ENCODE measurements at regions of chr17 and their contacts with region 1.

Region 1: GRCh38 chr17:64506576-64507477 is at the start of gene CEP95:
- DNase-seq: peak; percentile 98
- ATAC-seq: peak; percentile 64
- H3K4me3 Mint-ChIP-seq: peak within 1 kb of the TSS; percentile 99
- H3K27ac Mint-ChIP-seq: peak within 1 kb of the TSS; percentile 100
- H3K4me1 Mint-ChIP-seq: peaks cover 45% of the 10 kb centered on the region
- H3K27me3 Mint-ChIP-seq: no peaks in the 10 kb centered on the region
- total RNA-seq, gene CEP95: 49.2 to 51.7 TPM

Region 2: DNA sequence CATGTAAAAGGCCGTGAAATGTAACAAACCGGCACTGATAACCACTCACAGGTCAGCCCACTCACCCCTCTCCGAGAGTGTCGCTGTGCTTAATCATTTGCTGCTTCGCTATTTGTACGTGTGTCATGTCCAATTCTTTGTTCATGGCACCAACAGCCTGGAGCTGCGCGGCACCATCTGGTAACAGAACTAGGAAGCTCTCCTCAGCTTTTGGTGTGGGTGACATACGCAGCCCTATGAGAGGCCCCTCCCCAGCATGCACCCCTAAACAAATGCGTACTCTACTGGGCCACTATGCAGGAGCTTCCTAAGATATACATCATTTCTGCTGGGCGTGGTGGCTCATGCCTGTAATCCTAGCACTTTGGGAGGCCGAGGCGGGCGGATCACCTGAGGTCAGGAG is 113.8 kb before region 1 on chr17:
- CTCF ChIA-PET with region 1: interaction called, 3 read pairs
- POLR2A ChIA-PET with region 1: interaction called, 31 read pairs
- DNase-seq: peak; percentile 64
- ATAC-seq: peak; percentile 52
- H3K4me3 Mint-ChIP-seq: peak overlapping the region; percentile 88
- H3K27ac Mint-ChIP-seq: peak overlapping the region; percentile 95
- H3K4me1 Mint-ChIP-seq: peaks cover 71% of the 10 kb centered on the region
- H3K27me3 Mint-ChIP-seq: no peaks in the 10 kb centered on the region

Region 3: GRCh38 chr17:64399071-64399766 is 107.6 kb before region 1 on chr17:
- CTCF ChIA-PET with region 1: no interaction called
- POLR2A ChIA-PET with region 1: interaction called, 31 read pairs
- DNase-seq: peak; percentile 51
- ATAC-seq: peak; percentile 13
- H3K4me3 Mint-ChIP-seq: peak overlapping the region; percentile 54
- H3K27ac Mint-ChIP-seq: peak overlapping the region; percentile 78
- H3K4me1 Mint-ChIP-seq: peaks cover 67% of the 10 kb centered on the region
- H3K27me3 Mint-ChIP-seq: no peaks in the 10 kb centered on the region

Region 4: DNA sequence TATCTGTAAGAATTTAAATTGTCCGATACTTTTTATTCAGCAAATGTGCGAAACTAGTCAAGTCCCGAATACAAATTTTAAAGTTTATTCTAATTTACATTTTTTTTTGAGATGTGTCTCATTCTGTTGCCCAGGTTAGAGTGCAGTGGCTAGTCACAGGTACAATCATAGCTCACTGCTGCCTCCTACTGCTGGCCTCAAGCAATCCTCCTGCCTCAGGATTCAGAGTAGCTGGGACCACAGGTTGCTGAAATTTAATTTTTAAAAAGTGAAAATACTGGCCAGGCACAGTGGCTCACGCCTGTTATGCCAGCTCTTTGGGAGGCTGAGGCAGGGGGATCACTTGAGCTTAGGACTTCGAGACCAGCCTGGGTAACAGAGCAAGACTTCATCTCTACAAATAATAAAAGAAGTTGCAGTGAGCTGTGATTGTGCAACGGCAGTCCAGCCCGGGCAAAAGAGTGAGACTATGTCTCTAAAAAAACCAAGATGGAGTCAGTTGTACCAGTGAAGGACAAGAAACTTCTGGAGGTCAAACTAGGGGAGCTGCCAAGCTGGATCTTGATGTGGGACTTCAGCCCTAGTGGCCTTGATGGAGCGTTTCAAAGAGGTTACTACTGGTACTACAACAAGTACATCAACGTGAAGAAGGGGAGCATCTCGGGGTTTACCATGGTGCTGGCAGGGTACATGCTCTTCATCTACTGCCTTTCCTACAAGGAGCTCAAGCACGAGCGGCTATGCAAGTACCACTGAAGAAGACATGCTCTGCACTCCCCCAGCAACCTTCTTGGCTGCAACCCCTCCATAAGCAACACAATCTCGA is 15.6 kb before region 1 on chr17:
- CTCF ChIA-PET with region 1: interaction called, 76 read pairs
- POLR2A ChIA-PET with region 1: interaction called, 151 read pairs
- DNase-seq: peak; percentile 78
- ATAC-seq: peak; percentile 73
- H3K4me3 Mint-ChIP-seq: no peak overlapping the region
- H3K27ac Mint-ChIP-seq: no peak overlapping the region
- H3K4me1 Mint-ChIP-seq: peaks cover 38% of the 10 kb centered on the region
- H3K27me3 Mint-ChIP-seq: no peaks in the 10 kb centered on the region

Region 5: GRCh38 chr17:64599187-64599676 is 92.4 kb after region 1 on chr17:
- CTCF ChIA-PET with region 1: interaction called, 13 read pairs
- POLR2A ChIA-PET with region 1: interaction called, 22 read pairs
- DNase-seq: peak; percentile 83
- ATAC-seq: peak; percentile 100
- H3K4me3 Mint-ChIP-seq: peak overlapping the region; percentile 42
- H3K27ac Mint-ChIP-seq: peak overlapping the region; percentile 71
- H3K4me1 Mint-ChIP-seq: peaks cover 31% of the 10 kb centered on the region
- H3K27me3 Mint-ChIP-seq: no peaks in the 10 kb centered on the region

Region 6: DNA sequence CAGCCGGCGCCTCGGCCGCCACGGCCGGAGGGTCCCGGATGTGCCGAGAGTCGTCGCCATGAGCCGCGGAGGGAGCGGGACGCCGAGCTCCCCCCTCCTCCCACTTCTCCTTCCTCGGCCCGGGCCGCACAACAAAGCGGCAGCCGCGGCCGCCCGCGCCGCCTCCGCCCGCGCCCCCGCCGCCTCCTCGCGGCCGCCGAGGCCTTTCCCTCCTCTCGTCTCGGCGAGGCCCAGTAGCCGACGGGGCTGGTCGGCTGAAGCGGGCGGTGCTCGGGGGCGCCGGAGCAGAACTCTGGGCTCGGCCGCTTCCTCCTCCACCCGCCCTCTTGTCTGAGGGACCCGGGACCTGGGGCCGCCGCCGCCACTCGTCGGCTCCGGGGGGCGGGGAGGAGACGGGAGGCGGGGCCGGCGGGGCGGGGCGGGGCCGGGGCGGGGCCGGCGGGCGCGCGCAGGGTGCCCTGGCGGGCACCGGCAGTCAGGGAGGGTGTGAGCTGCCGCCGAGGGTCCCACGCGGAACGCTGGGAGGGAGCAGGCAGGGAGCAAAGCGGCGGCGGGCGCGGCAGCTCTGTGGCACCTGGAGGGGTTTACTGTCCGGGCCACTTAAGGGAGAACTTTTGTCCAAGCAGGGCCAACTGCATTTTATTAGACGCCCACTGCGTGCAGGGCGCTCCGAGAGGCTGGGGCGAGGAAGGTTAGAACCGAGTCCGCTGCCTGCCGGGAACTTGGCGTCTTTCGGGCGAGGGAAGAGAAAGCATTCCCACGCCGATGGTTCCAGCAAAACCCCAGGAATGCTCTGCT is 155.3 kb after region 1 on chr17 and contains the start of gene SMURF2:
- CTCF ChIA-PET with region 1: no interaction called
- POLR2A ChIA-PET with region 1: interaction called, 10 read pairs
- DNase-seq: peak; percentile 84
- ATAC-seq: peak; percentile 88
- H3K4me3 Mint-ChIP-seq: peak within 1 kb of the TSS; percentile 98
- H3K27ac Mint-ChIP-seq: peak within 1 kb of the TSS; percentile 94
- H3K4me1 Mint-ChIP-seq: peaks cover 36% of the 10 kb centered on the region
- H3K27me3 Mint-ChIP-seq: no peaks in the 10 kb centered on the region
- total RNA-seq, gene SMURF2: 16.1 to 16.4 TPM

Region 7: DNA sequence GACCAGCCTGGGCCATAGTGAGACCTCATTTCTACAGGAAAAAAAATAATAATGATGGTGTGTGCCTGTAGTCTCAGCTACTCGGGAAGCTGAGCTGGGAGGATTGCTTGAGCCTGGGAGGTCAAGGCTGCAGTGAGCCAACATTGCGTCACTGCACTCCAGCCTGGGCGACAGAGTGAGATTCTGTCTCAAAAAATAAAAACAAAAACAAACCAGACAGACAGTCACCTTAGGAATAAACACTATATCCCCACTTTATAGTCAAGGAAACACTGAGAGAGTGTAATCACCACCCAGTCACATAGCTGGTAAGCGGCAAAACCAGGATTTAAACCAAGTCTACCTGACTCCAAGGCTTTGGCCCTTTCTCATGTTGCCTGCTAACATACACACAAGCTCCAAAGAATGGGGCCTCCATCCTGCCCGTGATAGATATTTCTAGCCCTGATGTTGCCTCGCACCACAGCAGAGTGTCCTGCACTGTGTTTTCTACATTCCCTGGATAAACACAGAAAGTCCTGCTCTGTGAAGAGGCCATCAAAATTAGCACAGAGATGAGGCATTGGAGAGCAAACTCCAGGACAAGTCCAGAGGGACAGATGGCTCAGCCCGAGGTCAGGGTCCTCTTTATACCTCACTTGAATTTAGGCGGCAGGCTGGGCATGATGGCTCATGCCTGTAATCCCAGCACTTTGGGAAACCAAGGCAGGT is 221.4 kb after region 1 on chr17:
- CTCF ChIA-PET with region 1: no interaction called
- POLR2A ChIA-PET with region 1: no interaction called
- DNase-seq: no peak
- ATAC-seq: no peak
- H3K4me3 Mint-ChIP-seq: no peak overlapping the region
- H3K27ac Mint-ChIP-seq: no peak overlapping the region
- H3K4me1 Mint-ChIP-seq: no peaks in the 10 kb centered on the region
- H3K27me3 Mint-ChIP-seq: no peaks in the 10 kb centered on the region

Measured in activated CD8-positive, alpha-beta T cell treated with anti-CD3 and anti-CD28 coated beads, Interleukin-2, amount 10 ng/mL, durations not matched to agents 7 days and 5 days (primary cell).